ENCODE measurements at regions of chr18 and their contacts with region 1.

Region 1: GRCh38 chr18:63518178-63519012 is 23.8 kb upstream of the SERPINB12 start:
- DNase-seq: peak; percentile 39 to 60
- H3K4me3 ChIP-seq: no peak overlapping the region
- H3K27ac ChIP-seq: no peak overlapping the region
- H3K4me1 ChIP-seq: peaks cover 2 to 14% (median 6%) of the 10 kb centered on the region in 4 experiments; a peak in 4 of 7 replicates
- H3K27me3 ChIP-seq: no peaks in the 10 kb centered on the region
- CTCF ChIP-seq: peak in 2 of 3 experiments; percentile 80 to 86; a peak in 3 of 4 replicates
- EP300 ChIP-seq: peak in 1 of 2 experiments; percentile 32; a peak in 1 of 3 replicates
- POLR2A ChIP-seq: no peak
- RAD21 ChIP-seq: peak; percentile 93 to 97

Region 2: DNA sequence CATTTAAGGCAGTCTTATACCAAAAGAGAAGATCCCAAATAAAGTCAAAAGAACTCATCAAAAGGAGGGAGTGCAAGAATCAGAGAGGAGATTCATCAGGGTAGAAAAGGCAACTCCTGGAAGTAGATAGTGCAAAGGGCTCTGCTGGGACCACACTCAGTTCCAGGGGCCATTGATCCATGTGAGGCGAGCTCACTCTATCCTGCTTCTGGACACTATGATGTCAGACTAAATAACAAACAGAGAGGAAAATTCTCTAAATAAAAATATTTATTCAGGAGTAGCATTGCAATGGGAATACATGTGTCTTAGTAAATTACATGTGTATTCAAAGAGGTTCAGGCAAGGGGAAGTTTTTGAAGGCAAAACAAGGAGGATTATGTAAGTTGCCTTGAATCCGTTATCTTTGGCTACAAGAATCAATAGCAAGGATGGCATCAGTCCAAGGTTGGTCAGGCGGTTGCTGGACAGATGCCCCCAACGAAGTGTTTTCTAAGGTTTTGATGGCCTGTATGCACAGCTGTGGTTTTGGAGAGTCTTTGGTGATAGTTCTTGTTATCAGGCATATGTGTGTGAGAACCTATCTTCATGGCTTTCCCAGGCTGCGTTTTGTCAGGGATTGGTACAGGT is 10.6 kb after region 1 on chr18:
- CTCF ChIA-PET with region 1: interaction called, 33 read pairs
- POLR2A ChIA-PET with region 1: no interaction called
- DNase-seq: no peak
- H3K4me3 ChIP-seq: no peak overlapping the region
- H3K27ac ChIP-seq: no peak overlapping the region
- H3K4me1 ChIP-seq: no peaks in the 10 kb centered on the region
- H3K27me3 ChIP-seq: no peaks in the 10 kb centered on the region
- CTCF ChIP-seq: no peak
- EP300 ChIP-seq: no peak
- POLR2A ChIP-seq: no peak
- RAD21 ChIP-seq: no peak

Region 3: DNA sequence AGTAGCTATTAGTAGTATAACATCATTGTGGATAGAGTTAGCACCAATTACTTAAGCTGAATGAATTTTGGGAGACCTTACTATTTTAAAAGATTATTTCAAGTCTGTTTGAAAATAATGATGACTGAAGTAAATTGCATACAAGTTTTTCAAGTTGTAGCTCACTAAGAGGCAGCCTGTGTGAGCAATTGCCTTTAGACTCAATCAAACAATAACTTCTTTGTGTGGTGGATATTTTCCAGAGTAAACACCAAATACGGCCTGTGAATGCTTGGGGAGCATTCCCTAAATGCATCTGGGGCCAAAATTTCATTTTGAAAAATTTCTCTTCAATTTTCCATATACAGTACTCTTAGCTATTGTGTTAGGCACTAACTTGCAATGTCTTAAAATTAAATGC is 31.7 kb after region 1 on chr18:
- CTCF ChIA-PET with region 1: interaction called, 11 read pairs
- POLR2A ChIA-PET with region 1: no interaction called
- DNase-seq: no peak
- H3K4me3 ChIP-seq: no peak overlapping the region
- H3K27ac ChIP-seq: no peak overlapping the region
- H3K4me1 ChIP-seq: no peaks in the 10 kb centered on the region
- H3K27me3 ChIP-seq: no peaks in the 10 kb centered on the region
- CTCF ChIP-seq: no peak
- EP300 ChIP-seq: no peak
- POLR2A ChIP-seq: no peak
- RAD21 ChIP-seq: no peak

Region 4: DNA sequence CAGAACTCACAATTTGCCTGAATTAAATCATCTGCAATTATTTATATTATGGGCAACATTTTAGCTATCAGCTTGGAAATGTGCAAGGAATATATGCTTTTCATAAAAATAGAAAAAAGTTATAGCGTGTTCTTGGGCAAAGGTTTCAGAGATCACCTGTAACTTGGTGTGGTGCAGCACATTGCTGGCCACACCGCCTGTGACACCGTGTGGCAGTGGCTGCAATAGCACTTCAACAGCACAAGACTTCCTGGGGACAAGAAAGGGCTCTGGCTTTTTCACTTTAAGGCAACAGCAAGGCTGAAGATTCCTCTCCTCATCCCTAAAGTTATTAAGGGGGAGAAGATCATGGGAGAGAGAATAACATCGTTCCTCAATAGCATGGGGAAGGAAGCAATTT is 158.1 kb after region 1 on chr18:
- CTCF ChIA-PET with region 1: interaction called, 35 read pairs
- POLR2A ChIA-PET with region 1: no interaction called
- DNase-seq: no peak
- H3K4me3 ChIP-seq: no peak overlapping the region
- H3K27ac ChIP-seq: no peak overlapping the region
- H3K4me1 ChIP-seq: no peaks in the 10 kb centered on the region
- H3K27me3 ChIP-seq: no peaks in the 10 kb centered on the region
- CTCF ChIP-seq: peak; percentile 66 to 81 (median 77)
- EP300 ChIP-seq: no peak
- POLR2A ChIP-seq: no peak
- RAD21 ChIP-seq: peak; percentile 74 to 76

Region 5: GRCh38 chr18:63823518-63824219 is 305.3 kb after region 1 on chr18:
- CTCF ChIA-PET with region 1: interaction called, 20 read pairs
- POLR2A ChIA-PET with region 1: no interaction called
- DNase-seq: peak in 1 of 2 experiments; percentile 58
- H3K4me3 ChIP-seq: no peak overlapping the region
- H3K27ac ChIP-seq: no peak overlapping the region
- H3K4me1 ChIP-seq: no peaks in the 10 kb centered on the region
- H3K27me3 ChIP-seq: no peaks in the 10 kb centered on the region
- CTCF ChIP-seq: peak in 2 of 3 experiments; percentile 44 to 59; a peak in 3 of 4 replicates
- EP300 ChIP-seq: no peak
- POLR2A ChIP-seq: no peak
- RAD21 ChIP-seq: peak; percentile 39 to 50; a peak in 3 of 4 replicates

Region 6: DNA sequence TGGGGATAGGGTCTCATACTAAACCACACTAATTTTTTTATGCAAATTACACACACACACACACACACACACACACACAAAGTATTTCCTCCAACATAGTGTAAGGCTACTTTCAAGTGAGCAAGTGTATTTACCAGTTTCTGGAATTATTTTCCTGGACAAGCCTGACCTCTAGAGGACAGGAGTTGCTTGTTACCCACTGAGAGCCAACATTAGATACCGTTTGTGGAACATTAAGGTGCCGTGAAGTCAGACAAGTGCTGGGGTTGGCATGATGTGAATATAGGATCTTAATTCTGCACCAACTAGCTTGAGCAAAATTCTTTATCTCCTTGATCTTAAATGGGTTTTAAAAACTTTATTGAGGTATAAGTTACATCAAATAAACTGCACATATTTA is 329.8 kb after region 1 on chr18:
- CTCF ChIA-PET with region 1: interaction called, 73 read pairs
- POLR2A ChIA-PET with region 1: no interaction called
- DNase-seq: no peak
- H3K4me3 ChIP-seq: no peak overlapping the region
- H3K27ac ChIP-seq: no peak overlapping the region
- H3K4me1 ChIP-seq: no peaks in the 10 kb centered on the region
- H3K27me3 ChIP-seq: no peaks in the 10 kb centered on the region
- CTCF ChIP-seq: peak in 2 of 3 experiments; percentile 63 to 70; a peak in 3 of 4 replicates
- EP300 ChIP-seq: no peak
- POLR2A ChIP-seq: no peak
- RAD21 ChIP-seq: peak; percentile 75 to 79